CD4-positive, alpha-beta T cell (primary cell): ENCODE measurements at regions of chr19 and their contacts with region 1.

Region 1: GRCh38 chr19:38831142-38831605 is 420 bp downstream of the ECH1 start:
- DNase-seq: peak in 3 of 14 experiments; percentile 7 to 61 (median 44)
- ATAC-seq: peak; percentile 7
- H3K4me3 ChIP-seq: peak overlapping the region; percentile 73
- H3K4me3 Mint-ChIP-seq: peak overlapping the region; percentile 94
- H3K27ac ChIP-seq: peak overlapping the region; percentile 69 to 74
- H3K27ac Mint-ChIP-seq: peak overlapping the region; percentile 92
- H3K4me1 ChIP-seq: peaks cover 34% of the 10 kb centered on the region
- H3K4me1 Mint-ChIP-seq: peaks cover 39% of the 10 kb centered on the region
- H3K27me3 ChIP-seq: no peaks in the 10 kb centered on the region
- H3K27me3 Mint-ChIP-seq: no peaks in the 10 kb centered on the region
- CTCF ChIP-seq: no peak

Region 2: DNA sequence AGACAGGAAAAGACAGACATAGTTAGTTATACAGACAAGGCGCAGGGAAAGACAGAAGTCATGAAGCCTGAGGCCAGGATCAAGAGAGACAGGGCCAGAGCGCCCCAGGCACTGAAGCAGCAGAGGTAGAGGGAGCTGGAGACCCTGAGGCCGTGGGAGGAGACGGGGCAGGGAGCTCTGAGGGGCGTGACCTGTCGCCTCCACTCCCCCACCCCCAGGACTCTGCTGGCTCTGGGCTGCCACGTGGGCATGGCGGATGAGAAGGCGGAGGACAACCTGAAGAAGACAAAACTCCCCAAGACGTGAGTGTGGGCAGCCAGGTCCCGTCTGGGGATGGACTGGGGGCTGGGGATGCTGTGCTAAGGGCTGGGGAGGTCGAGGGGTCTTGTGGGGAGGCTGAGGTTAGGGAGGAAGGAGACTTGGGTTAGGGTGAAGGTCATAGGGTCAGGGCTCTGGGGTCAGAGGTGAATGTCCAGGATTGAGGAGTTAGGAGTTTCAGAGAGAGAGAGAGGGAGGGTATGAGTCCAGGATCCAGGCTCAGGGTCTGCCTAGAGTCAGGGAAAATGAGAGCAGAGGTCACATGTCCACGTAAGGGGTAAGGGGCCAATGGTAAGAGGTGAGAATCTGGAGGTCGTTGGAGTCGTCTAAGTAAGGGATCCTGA is 366.6 kb before region 1 on chr19:
- CTCF ChIA-PET with region 1: no interaction called
- POLR2A ChIA-PET with region 1: no interaction called
- intact Hi-C with region 1: no loop called
- DNase-seq: no peak
- ATAC-seq: no peak
- H3K4me3 ChIP-seq: no peak overlapping the region
- H3K4me3 Mint-ChIP-seq: no peak overlapping the region
- H3K27ac ChIP-seq: no peak overlapping the region
- H3K27ac Mint-ChIP-seq: no peak overlapping the region
- H3K4me1 ChIP-seq: no peaks in the 10 kb centered on the region
- H3K4me1 Mint-ChIP-seq: no peaks in the 10 kb centered on the region
- H3K27me3 ChIP-seq: no peaks in the 10 kb centered on the region
- H3K27me3 Mint-ChIP-seq: peaks cover 32% of the 10 kb centered on the region
- CTCF ChIP-seq: no peak

Region 3: GRCh38 chr19:38784224-38784623 is 47.0 kb before region 1 on chr19:
- CTCF ChIA-PET with region 1: no interaction called
- POLR2A ChIA-PET with region 1: no interaction called
- intact Hi-C with region 1: loop called in 1 of 2 experiments (anchors 5 kb)
- DNase-seq: no peak
- ATAC-seq: no peak
- H3K4me3 ChIP-seq: no peak overlapping the region
- H3K4me3 Mint-ChIP-seq: no peak overlapping the region
- H3K27ac ChIP-seq: no peak overlapping the region
- H3K27ac Mint-ChIP-seq: no peak overlapping the region
- H3K4me1 ChIP-seq: no peaks in the 10 kb centered on the region
- H3K4me1 Mint-ChIP-seq: no peaks in the 10 kb centered on the region
- H3K27me3 ChIP-seq: no peaks in the 10 kb centered on the region
- H3K27me3 Mint-ChIP-seq: no peaks in the 10 kb centered on the region
- CTCF ChIP-seq: no peak

Region 4: DNA sequence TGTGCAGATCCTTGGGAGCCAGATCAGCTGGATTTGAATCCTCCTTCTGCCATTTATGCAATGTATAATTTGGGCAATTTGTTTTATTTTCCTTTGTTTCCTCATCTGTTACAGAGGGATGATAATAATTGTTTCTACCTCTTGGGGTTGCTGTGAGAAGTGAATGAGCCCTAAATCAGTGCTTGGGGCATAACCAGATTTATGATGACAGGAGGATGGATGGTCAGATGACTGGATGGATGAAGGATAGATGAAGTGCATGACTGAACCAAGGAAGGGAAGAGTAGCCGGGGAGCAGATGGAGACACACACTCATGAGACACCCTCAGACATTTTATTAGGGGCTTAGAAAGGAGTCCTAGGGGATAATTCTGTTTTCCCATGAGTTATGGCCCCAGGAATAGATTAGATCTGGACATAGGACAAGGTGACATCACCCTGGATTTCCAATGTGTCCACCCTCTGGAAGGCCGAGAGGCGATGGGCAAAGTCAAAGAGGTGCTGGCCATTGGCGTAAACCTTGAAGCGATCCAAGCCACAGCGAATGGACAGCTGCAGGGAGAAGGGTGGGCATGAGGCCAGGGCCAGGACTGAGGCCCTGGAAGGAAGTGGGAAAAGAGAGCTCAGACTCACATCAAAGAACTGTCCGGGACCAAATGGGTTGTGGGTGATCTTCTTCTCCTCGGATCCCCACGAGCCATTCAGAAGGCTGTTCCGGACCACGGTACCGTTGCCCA is 29.6 kb before region 1 on chr19:
- CTCF ChIA-PET with region 1: no interaction called
- POLR2A ChIA-PET with region 1: interaction called, 3 read pairs
- intact Hi-C with region 1: loop called in 1 of 2 experiments (anchors 2 kb)
- DNase-seq: no peak
- ATAC-seq: no peak
- H3K4me3 ChIP-seq: no peak overlapping the region
- H3K4me3 Mint-ChIP-seq: no peak overlapping the region
- H3K27ac ChIP-seq: no peak overlapping the region
- H3K27ac Mint-ChIP-seq: no peak overlapping the region
- H3K4me1 ChIP-seq: peaks cover 7% of the 10 kb centered on the region
- H3K4me1 Mint-ChIP-seq: peaks cover 7% of the 10 kb centered on the region
- H3K27me3 ChIP-seq: no peaks in the 10 kb centered on the region
- H3K27me3 Mint-ChIP-seq: no peaks in the 10 kb centered on the region
- CTCF ChIP-seq: no peak

Region 5: GRCh38 chr19:38849860-38850435 is 18.8 kb after region 1 on chr19 and contains the start of gene HNRNPL:
- CTCF ChIA-PET with region 1: interaction called, 5 read pairs
- POLR2A ChIA-PET with region 1: interaction called, 61 read pairs
- intact Hi-C with region 1: loop called (anchors 1 kb)
- DNase-seq: peak; percentile 98 to 100 (median 99)
- ATAC-seq: peak; percentile 69
- H3K4me3 ChIP-seq: peak within 1 kb of the TSS; percentile 76
- H3K4me3 Mint-ChIP-seq: peak within 1 kb of the TSS; percentile 98
- H3K27ac ChIP-seq: peak within 1 kb of the TSS; percentile 95 to 97
- H3K27ac Mint-ChIP-seq: peak within 1 kb of the TSS; percentile 97
- H3K4me1 ChIP-seq: peaks cover 66% of the 10 kb centered on the region
- H3K4me1 Mint-ChIP-seq: peaks cover 63% of the 10 kb centered on the region
- H3K27me3 ChIP-seq: no peaks in the 10 kb centered on the region
- H3K27me3 Mint-ChIP-seq: no peaks in the 10 kb centered on the region
- CTCF ChIP-seq: peak; percentile 16
- total RNA-seq, gene HNRNPL: 535 to 565 TPM

Region 6: GRCh38 chr19:38891771-38892170 is 60.6 kb after region 1 on chr19:
- CTCF ChIA-PET with region 1: interaction called, 13 read pairs
- POLR2A ChIA-PET with region 1: no interaction called
- intact Hi-C with region 1: no loop called
- DNase-seq: peak in 1 of 14 experiments; percentile 2
- ATAC-seq: no peak
- H3K4me3 ChIP-seq: no peak overlapping the region
- H3K4me3 Mint-ChIP-seq: no peak overlapping the region
- H3K27ac ChIP-seq: no peak overlapping the region
- H3K27ac Mint-ChIP-seq: no peak overlapping the region
- H3K4me1 ChIP-seq: peaks cover 16% of the 10 kb centered on the region
- H3K4me1 Mint-ChIP-seq: peaks cover 6% of the 10 kb centered on the region
- H3K27me3 ChIP-seq: no peaks in the 10 kb centered on the region
- H3K27me3 Mint-ChIP-seq: no peaks in the 10 kb centered on the region
- CTCF ChIP-seq: no peak

Region 7: DNA sequence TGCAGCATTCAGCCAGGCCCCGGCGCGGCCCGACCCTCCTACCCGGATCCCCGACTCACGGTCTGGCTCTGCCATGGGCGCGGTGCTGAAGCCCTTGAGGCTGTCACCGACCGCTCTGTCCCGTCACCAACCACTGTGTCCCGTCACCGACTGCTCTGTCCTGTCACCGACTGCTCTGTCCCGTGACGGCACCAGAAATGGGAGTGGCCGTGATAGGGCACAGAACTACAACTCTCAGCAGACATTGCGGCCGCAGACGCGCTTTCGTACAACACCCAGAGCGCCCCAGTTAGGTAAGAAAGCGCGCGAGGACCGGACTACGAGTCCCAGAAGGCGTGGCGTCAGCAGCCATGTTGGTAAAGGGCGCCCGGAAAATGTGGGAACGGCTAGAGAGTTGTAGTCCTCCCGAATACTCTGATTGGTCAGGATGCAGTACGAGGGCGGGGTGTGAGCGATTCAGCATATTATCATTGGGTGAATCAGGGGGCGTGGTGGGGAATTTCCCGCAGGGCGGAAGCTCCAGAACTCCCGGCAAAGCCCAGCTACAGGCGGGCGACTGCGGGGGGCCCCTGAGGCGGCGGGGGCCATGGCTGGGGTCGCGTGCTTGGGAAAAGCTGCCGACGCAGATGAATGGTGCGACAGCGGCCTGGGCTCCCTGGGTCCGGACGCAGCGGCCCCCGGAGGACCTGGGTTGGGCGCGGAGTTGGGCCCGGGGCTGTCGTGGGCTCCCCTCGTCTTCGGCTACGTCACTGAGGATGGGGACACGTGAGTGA is 68.5 kb after region 1 on chr19 and contains the starts of genes NFKBIB and SIRT2:
- CTCF ChIA-PET with region 1: no interaction called
- POLR2A ChIA-PET with region 1: interaction called, 6 read pairs
- intact Hi-C with region 1: loop called in 1 of 2 experiments (anchors 1 kb)
- DNase-seq: peak; percentile 97 to 100 (median 99)
- ATAC-seq: peak; percentile 86
- H3K4me3 ChIP-seq: peak within 1 kb of the TSS; percentile 97
- H3K4me3 Mint-ChIP-seq: peak within 1 kb of the TSS; percentile 93
- H3K27ac ChIP-seq: peak within 1 kb of the TSS; percentile 97 to 99
- H3K27ac Mint-ChIP-seq: peak within 1 kb of the TSS; percentile 89
- H3K4me1 ChIP-seq: peaks cover 49% of the 10 kb centered on the region
- H3K4me1 Mint-ChIP-seq: peaks cover 47% of the 10 kb centered on the region
- H3K27me3 ChIP-seq: no peaks in the 10 kb centered on the region
- H3K27me3 Mint-ChIP-seq: no peaks in the 10 kb centered on the region
- CTCF ChIP-seq: no peak
- total RNA-seq, gene NFKBIB: 29.3 to 30.1 TPM
- total RNA-seq, gene SIRT2: 60.8 to 67.8 TPM

Region 8: GRCh38 chr19:38917516-38918491 is 86.6 kb after region 1 on chr19:
- CTCF ChIA-PET with region 1: no interaction called
- POLR2A ChIA-PET with region 1: no interaction called
- intact Hi-C with region 1: no loop called
- DNase-seq: no peak
- ATAC-seq: no peak
- H3K4me3 ChIP-seq: no peak overlapping the region
- H3K4me3 Mint-ChIP-seq: no peak overlapping the region
- H3K27ac ChIP-seq: no peak overlapping the region
- H3K27ac Mint-ChIP-seq: no peak overlapping the region
- H3K4me1 ChIP-seq: peaks cover 3% of the 10 kb centered on the region
- H3K4me1 Mint-ChIP-seq: no peaks in the 10 kb centered on the region
- H3K27me3 ChIP-seq: no peaks in the 10 kb centered on the region
- H3K27me3 Mint-ChIP-seq: no peaks in the 10 kb centered on the region
- CTCF ChIP-seq: no peak